Breast epithelium (tissue), 4 donors: ENCODE measurements at regions of chr7 and their contacts with region 1.

Region 1: DNA sequence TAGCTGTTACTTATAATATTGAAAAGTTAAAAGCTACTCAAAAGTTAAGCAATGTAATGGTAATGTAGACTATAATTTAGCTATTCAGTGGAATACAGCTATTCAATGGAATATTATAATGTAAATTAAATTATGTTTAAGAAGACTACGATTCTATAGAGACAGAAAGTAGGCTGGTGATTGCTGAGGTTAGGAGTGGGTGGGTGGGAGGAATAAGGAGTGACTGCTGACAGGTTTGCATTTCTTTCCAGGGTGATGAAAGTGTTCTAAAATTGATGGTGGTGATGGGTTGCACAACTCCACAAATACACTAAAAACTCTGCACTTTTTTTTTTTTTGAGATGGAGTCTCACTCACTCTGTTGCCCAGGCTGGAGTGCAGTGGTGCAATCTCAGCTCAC is 21.4 kb downstream of the DENND2A start:
- DNase-seq: no peak
- H3K4me3 ChIP-seq: no peak overlapping the region
- H3K27ac ChIP-seq: no peak overlapping the region
- H3K4me1 ChIP-seq: no peaks in the 10 kb centered on the region
- H3K27me3 ChIP-seq: no peaks in the 10 kb centered on the region
- CTCF ChIP-seq: no peak
- POLR2A ChIP-seq: no peak

Region 2: GRCh38 chr7:140607441-140607989 is 11.7 kb before region 1 on chr7:
- intact Hi-C with region 1: loop called (anchors 1 kb)
- DNase-seq: peak in 1 of 2 donors; percentile 67
- H3K4me3 ChIP-seq: no peak overlapping the region
- H3K27ac ChIP-seq: peak overlapping the region; percentile 50 to 74
- H3K4me1 ChIP-seq: peaks cover 0 to 4% of the 10 kb centered on the region in 2 donors
- H3K27me3 ChIP-seq: no peaks in the 10 kb centered on the region
- CTCF ChIP-seq: no peak
- POLR2A ChIP-seq: no peak

Region 3: DNA sequence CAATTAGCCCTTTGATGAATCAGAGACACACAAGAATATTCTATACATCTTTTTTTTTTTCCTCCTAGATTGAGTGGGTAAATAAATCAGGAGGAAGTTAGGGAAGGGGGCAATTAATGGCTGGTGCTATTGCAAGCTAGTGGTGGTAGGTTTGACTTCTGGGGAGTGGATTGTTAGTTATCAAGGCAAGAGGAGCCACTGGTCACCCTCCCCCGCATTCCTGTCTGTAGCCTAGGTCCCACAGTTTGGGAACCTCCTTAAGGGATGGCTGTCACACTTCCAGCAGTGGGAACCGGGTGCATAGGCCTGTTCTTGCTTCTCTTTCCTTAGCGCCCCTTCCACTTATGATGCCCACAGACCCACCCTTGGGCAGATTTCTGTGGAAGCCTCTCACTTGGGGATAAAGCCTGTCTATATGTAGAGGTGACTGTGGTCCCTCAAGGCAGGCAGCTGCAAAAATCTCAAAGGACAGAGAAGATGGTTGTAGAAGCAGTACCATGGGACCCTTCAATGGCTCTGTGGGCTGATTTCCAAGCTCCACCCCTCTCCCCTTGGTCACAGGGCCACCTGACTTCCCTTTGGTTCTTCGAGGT is 51.3 kb after region 1 on chr7:
- intact Hi-C with region 1: no loop called
- DNase-seq: no peak
- H3K4me3 ChIP-seq: no peak overlapping the region
- H3K27ac ChIP-seq: no peak overlapping the region
- H3K4me1 ChIP-seq: peaks cover 2 to 7% of the 10 kb centered on the region in 2 donors
- H3K27me3 ChIP-seq: no peaks in the 10 kb centered on the region
- CTCF ChIP-seq: no peak
- POLR2A ChIP-seq: no peak

Region 4: DNA sequence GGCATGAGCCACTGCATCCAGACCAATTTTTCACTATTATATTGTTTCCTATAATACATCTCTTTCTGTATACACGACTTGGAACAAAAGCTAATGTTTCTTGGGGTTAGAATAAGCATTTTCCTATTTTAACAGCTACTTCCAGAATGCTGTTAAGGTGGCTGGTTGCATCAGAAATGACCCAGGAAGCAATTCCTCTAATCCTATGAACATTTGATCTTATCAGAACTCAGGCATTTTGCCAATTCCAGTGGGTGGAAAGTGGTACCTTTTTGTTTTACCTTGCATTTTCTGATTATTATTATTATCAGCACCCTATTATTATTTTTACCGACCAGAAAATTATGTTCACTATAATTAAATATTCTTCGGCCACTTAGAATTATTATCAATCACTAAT is 150.7 kb after region 1 on chr7:
- intact Hi-C with region 1: no loop called
- DNase-seq: no peak
- H3K4me3 ChIP-seq: no peak overlapping the region
- H3K27ac ChIP-seq: no peak overlapping the region
- H3K4me1 ChIP-seq: no peaks in the 10 kb centered on the region
- H3K27me3 ChIP-seq: no peaks in the 10 kb centered on the region
- CTCF ChIP-seq: no peak
- POLR2A ChIP-seq: no peak